Activated naive CD4-positive, alpha-beta T cell treated with anti-CD3 and anti-CD28 coated beads for 36 hours (primary cell): ENCODE measurements at regions of chr5 and their contacts with region 1.

Region 1: DNA sequence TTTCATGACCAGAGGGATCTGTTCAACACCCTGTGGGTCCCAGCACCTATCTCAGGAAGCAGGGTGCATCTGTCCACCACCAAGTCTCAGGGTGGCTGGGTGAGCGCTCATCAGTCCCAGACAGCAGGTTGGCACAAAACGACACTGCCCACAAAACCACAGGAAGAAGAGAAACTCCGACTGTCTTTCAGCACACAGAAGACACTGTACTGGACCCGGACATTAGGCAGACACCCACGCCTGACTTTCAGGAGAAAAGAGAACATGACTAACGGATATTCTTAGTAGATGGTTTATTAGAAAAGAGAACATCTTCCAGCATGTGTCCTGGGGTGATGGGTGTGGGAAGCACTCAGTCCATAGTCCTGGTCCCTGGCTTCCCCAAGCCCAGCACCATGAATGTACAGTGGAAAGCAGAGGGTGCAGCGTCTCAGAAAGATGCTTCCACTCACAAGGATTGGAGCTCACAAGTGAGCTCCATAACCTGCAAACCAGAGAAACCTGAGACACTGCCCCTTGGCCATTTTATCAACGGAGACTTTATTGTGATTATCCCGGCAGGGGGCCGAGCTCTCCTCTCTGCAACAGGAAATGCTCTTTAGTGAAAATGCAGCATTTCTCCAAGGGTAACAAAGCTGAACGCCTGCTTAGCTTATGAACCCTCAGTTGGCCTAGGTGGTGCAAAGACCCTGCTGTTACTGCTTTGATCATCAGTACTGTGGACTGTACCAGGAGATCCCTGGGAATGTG is 35.8 kb upstream of the LCP2 start:
- DNase-seq: peak; percentile 80
- H3K4me3 Mint-ChIP-seq: peak overlapping the region; percentile 42
- H3K27ac Mint-ChIP-seq: no peak overlapping the region
- H3K4me1 Mint-ChIP-seq: peaks cover 65% of the 10 kb centered on the region
- H3K27me3 Mint-ChIP-seq: no peaks in the 10 kb centered on the region

Region 2: DNA sequence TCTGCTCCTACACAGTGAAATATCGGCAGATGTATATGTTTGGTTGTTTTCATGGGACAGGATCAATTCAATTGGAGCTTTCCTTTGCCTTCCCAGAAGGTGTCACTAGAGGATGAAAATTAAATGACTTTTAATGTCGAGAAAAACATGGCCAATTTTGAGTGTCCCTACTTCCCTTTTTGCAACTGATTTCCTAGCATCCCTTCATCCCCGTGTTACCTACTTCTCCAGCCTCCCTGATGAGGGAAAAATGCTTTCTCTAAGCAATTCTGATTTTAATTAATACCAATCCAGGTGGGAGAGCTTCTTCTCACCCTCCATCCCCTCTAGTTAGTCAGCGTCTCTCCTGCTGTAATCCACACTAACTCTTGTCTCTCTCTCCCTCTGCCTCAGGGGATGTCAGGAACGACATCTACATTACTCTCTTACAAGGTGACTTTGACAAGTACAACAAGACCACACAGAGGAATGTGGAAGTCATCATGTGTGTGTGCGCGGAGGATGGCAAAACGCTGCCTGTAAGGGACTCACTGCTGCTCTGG is 631.4 kb before region 1 on chr5:
- CTCF ChIA-PET with region 1: no interaction called
- intact Hi-C with region 1: loop called (anchors 2 kb)
- DNase-seq: no peak
- H3K4me3 Mint-ChIP-seq: no peak overlapping the region
- H3K27ac Mint-ChIP-seq: peak overlapping the region; percentile 59
- H3K4me1 Mint-ChIP-seq: peaks cover 41% of the 10 kb centered on the region
- H3K27me3 Mint-ChIP-seq: no peaks in the 10 kb centered on the region

Region 3: GRCh38 chr5:170253844-170254455 is 79.4 kb before region 1 on chr5:
- CTCF ChIA-PET with region 1: interaction called, 12 read pairs
- intact Hi-C with region 1: loop called (anchors 1 kb)
- DNase-seq: peak; percentile 86
- H3K4me3 Mint-ChIP-seq: no peak overlapping the region
- H3K27ac Mint-ChIP-seq: peak overlapping the region; percentile 83
- H3K4me1 Mint-ChIP-seq: peaks cover 62% of the 10 kb centered on the region
- H3K27me3 Mint-ChIP-seq: no peaks in the 10 kb centered on the region

Region 4: DNA sequence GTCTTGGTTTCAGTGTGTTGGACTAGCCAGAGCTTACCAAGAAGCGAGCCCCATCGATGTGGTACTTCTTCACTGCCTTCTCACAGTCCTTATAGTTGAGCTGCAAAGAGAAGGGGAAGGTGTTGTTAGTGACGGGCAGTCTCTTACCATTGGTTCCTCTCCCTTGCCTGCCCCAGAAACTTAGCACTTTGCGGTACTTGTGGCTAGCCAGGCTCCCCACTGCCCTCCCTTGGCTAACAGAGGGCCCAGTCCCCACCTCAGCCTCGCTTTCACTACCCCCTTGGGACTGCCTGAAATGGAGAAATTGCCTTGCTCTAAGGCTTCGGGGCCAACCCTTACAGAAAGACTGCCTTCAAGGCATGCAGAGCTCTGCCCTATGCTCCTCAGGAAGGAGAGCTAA is 40.1 kb before region 1 on chr5:
- CTCF ChIA-PET with region 1: interaction called, 195 read pairs
- intact Hi-C with region 1: loop called (anchors 1 kb)
- DNase-seq: peak; percentile 66
- H3K4me3 Mint-ChIP-seq: peak overlapping the region; percentile 95
- H3K27ac Mint-ChIP-seq: peak overlapping the region; percentile 98
- H3K4me1 Mint-ChIP-seq: peaks cover 69% of the 10 kb centered on the region
- H3K27me3 Mint-ChIP-seq: no peaks in the 10 kb centered on the region

Region 5: DNA sequence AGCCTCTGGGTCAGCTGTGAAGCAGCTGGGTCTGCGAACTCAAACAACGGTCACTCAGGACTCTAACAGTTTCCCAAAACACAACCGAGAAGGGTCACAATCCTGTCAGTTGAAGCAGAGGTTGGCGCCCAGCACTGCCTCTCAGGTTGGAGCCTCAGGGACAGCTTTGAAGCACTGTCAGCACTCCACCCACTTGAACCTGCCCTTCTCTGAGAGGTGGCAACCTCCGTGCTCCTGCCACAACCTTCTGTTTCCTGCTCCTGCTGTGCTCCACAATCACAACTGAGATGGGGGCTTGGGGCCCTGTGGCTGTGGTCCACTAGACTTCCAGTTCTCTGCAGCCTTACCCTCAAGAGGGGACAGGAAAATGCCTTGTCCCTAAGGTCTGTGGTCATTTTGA is 14.0 kb before region 1 on chr5:
- CTCF ChIA-PET with region 1: interaction called, 12 read pairs
- intact Hi-C with region 1: no loop called
- DNase-seq: no peak
- H3K4me3 Mint-ChIP-seq: no peak overlapping the region
- H3K27ac Mint-ChIP-seq: no peak overlapping the region
- H3K4me1 Mint-ChIP-seq: peaks cover 37% of the 10 kb centered on the region
- H3K27me3 Mint-ChIP-seq: no peaks in the 10 kb centered on the region

Region 6: GRCh38 chr5:172006321-172007174 is 1673.2 kb after region 1 on chr5 and contains the start of gene FBXW11:
- CTCF ChIA-PET with region 1: no interaction called
- intact Hi-C with region 1: loop called (anchors 5 kb)
- DNase-seq: peak; percentile 96
- H3K4me3 Mint-ChIP-seq: peak within 1 kb of the TSS; percentile 96
- H3K27ac Mint-ChIP-seq: peak within 1 kb of the TSS; percentile 99
- H3K4me1 Mint-ChIP-seq: peaks cover 46% of the 10 kb centered on the region
- H3K27me3 Mint-ChIP-seq: no peaks in the 10 kb centered on the region
- total RNA-seq, gene FBXW11: 32.8 to 35.5 TPM